ENCODE measurements at regions of chr12 and their contacts with region 1.

Region 1: DNA sequence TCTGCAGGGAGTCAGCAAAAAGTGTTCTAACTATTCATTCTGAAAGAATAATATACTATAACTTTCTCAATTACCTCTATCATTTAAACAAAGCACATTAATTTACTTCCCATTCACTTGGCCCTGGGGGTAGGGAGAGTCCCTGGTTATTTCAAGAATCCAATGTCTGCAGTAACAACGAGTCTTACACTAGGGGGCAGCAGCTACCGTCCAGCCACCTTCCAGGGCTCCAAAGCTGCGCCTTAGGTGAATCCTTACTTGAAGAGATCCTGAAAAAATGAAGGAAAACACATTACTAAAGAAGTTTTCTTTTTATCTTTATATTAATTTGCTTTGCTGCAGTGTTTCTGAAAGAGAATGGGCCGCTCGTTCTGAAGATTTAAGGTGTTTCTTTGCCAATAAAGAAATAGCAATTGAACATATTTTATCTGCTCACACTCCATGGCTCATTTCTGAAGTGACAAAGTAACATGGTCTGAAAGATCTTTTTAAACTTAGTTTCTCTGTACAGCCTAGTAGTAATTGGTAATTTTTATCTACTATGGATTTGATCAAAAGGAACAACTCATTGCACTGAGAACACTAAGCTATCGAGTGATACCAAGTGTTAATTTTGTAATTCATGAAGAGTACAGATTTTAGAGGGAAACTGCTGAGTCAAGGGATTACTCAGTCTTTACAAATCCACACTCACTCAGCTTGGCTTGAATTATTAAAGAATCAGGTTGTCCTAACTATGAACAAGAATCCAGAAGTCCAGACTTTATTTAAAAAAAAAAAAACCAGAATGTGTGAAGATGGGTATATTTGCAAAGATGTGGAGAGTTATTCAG is 27.6 kb downstream of the BHLHE41 start:
- DNase-seq: peak; percentile 86
- H3K4me3 ChIP-seq: no peak overlapping the region
- H3K27ac ChIP-seq: no peak overlapping the region
- H3K4me1 ChIP-seq: peaks cover 0 to 3% (median 0%) of the 10 kb centered on the region in 4 donors
- H3K27me3 ChIP-seq: no peaks in the 10 kb centered on the region
- CTCF ChIP-seq: peak; percentile 69 to 91 (median 80)
- EP300 ChIP-seq: no peak
- POLR2A ChIP-seq: no peak

Region 2: DNA sequence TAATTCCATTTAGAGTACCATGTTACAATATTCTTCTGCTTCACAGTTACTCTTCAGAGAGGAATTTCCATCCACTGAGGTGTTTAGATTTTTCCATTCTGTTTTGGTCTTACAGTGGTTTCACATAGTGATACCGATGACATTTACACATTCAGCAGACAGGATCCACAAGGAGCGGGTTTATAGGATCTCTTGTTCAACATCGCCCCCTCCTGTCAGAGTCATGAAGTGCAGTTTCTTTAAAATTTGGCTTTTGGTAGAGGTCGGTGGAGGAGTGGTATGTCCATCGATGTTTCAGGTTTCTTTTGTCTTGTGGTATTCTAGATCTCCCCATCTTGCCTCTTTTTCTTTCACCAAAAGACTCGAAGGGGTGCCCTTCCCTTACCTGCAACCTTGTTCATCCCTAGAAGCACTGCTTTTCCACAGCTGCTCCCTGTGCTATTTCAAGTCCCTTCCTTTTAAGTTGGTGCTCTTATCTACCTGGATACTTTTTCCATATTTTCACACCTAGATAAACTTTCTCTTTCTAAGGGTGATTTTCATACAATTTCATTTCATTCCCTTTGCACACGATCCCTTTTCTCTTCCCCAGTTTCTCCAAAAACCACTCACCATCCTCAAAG is 554.4 kb after region 1 on chr12:
- intact Hi-C with region 1: loop called (anchors 5 kb)
- DNase-seq: no peak
- H3K4me3 ChIP-seq: no peak overlapping the region
- H3K27ac ChIP-seq: peak overlapping the region in 2 of 4 donors; percentile 25 to 39
- H3K4me1 ChIP-seq: peaks cover 0 to 25% (median 13%) of the 10 kb centered on the region in 4 donors
- H3K27me3 ChIP-seq: no peaks in the 10 kb centered on the region
- CTCF ChIP-seq: peak; percentile 69 to 82 (median 77)
- EP300 ChIP-seq: no peak
- POLR2A ChIP-seq: no peak

Region 3: GRCh38 chr12:26701604-26702215 is 604.4 kb after region 1 on chr12:
- intact Hi-C with region 1: loop called (anchors 5 kb)
- DNase-seq: no peak
- H3K4me3 ChIP-seq: no peak overlapping the region
- H3K27ac ChIP-seq: no peak overlapping the region
- H3K4me1 ChIP-seq: peaks cover 0 to 23% (median 18%) of the 10 kb centered on the region in 4 donors
- H3K27me3 ChIP-seq: no peaks in the 10 kb centered on the region
- CTCF ChIP-seq: peak; percentile 15 to 59 (median 32)
- EP300 ChIP-seq: no peak
- POLR2A ChIP-seq: no peak